Activated CD8-positive, alpha-beta T cell treated with anti-CD3 and anti-CD28 coated beads, Interleukin-2, amount 10 ng/mL, durations not matched to agents 7 days and 5 days (primary cell): ENCODE measurements at regions of chr14 and their contacts with region 1.

Region 1: DNA sequence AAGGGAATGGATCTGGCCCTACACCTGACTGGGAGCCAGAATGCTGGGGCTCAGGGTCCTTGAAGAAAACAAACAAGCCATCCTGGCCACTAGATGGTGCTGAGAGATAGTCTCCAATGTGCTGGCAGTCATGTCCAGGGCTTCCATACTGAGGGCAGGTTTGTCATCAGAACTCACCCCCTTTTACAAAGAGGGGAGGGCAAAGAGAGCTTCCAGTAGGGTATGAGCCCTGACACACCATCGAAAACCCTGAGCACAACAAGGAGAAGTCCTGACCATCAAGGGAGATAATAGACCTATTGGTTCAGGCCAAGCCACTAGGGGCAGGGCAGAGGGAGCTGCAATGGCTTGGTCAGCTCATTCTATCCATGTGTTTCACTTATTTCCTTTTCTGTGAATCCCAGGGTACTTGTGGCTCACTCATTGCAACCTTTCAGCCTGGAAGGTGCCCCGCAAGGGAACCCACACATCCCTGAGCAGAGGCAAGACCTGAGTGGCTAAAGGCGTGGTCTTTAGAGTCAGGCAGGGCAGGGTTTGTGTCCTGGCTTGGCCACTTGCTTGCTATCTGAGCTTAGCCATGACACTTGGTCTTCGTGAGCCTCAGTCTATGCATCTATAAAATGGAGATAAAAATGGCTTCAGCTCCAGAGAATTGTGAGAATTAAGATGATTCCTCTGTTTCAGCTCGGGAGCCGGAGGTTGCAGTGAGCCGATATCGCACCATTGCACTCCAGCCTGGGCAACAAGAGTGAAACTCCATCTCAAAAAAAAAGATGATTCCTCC is 6.2 kb upstream of the PLEKHH1 start:
- DNase-seq: peak; percentile 60
- ATAC-seq: peak; percentile 83
- H3K4me3 Mint-ChIP-seq: no peak overlapping the region
- H3K27ac Mint-ChIP-seq: no peak overlapping the region
- H3K4me1 Mint-ChIP-seq: no peaks in the 10 kb centered on the region
- H3K27me3 Mint-ChIP-seq: peaks cover 56% of the 10 kb centered on the region

Region 2: DNA sequence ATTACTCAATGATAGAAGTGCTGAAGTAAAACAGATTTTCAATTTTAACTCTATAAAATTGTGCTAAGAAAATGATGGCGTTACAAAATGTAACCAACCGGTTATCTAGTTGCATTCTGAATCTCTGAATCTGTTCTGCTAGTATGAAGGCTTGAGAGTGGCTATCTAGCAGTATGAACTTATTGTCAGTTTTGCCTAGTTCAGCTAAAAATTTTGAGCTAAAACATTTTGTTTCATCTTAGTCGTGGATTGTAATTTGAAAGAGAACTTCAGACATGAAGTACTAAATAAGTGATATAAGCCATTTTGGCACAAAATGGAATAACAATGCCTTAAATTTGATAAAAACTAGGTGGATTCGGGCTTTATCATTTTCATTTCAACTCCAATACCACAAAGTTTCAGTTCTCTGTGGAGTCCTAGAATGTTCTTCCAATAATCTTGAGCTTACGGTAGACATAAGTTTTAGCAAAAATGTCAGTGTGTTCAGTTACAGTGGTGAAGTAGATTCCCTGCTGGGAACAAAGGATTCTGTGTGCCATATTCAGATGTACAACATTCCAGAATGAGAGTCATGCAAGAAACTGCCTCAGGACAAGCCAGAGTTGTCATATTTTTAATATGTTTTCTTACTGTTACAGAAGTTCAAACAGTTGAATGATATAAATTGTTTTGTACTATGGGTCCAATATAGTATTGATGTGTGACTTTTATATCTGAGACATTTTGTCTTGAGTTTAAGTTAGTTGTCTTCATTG is 195.3 kb before region 1 on chr14:
- CTCF ChIA-PET with region 1: no interaction called
- POLR2A ChIA-PET with region 1: no interaction called
- DNase-seq: no peak
- ATAC-seq: no peak
- H3K4me3 Mint-ChIP-seq: no peak overlapping the region
- H3K27ac Mint-ChIP-seq: no peak overlapping the region
- H3K4me1 Mint-ChIP-seq: no peaks in the 10 kb centered on the region
- H3K27me3 Mint-ChIP-seq: no peaks in the 10 kb centered on the region

Region 3: GRCh38 chr14:67510121-67510520 is 16.7 kb before region 1 on chr14:
- CTCF ChIA-PET with region 1: interaction called, 26 read pairs
- POLR2A ChIA-PET with region 1: no interaction called
- DNase-seq: no peak
- ATAC-seq: no peak
- H3K4me3 Mint-ChIP-seq: no peak overlapping the region
- H3K27ac Mint-ChIP-seq: no peak overlapping the region
- H3K4me1 Mint-ChIP-seq: peaks cover 10% of the 10 kb centered on the region
- H3K27me3 Mint-ChIP-seq: peaks cover 21% of the 10 kb centered on the region

Region 4: GRCh38 chr14:67515386-67516079 is 11.3 kb before region 1 on chr14:
- CTCF ChIA-PET with region 1: interaction called, 26 read pairs
- POLR2A ChIA-PET with region 1: interaction called, 3 read pairs
- DNase-seq: peak; percentile 43
- ATAC-seq: peak; percentile 71
- H3K4me3 Mint-ChIP-seq: peak overlapping the region; percentile 55
- H3K27ac Mint-ChIP-seq: no peak overlapping the region
- H3K4me1 Mint-ChIP-seq: peaks cover 23% of the 10 kb centered on the region
- H3K27me3 Mint-ChIP-seq: peaks cover 35% of the 10 kb centered on the region

Region 5: GRCh38 chr14:67541448-67542387 is 14.8 kb after region 1 on chr14:
- CTCF ChIA-PET with region 1: interaction called, 36 read pairs
- POLR2A ChIA-PET with region 1: interaction called, 3 read pairs
- DNase-seq: peak; percentile 26
- ATAC-seq: peak; percentile 83
- H3K4me3 Mint-ChIP-seq: peak overlapping the region; percentile 55
- H3K27ac Mint-ChIP-seq: no peak overlapping the region
- H3K4me1 Mint-ChIP-seq: peaks cover 11% of the 10 kb centered on the region
- H3K27me3 Mint-ChIP-seq: peaks cover 50% of the 10 kb centered on the region

Region 6: DNA sequence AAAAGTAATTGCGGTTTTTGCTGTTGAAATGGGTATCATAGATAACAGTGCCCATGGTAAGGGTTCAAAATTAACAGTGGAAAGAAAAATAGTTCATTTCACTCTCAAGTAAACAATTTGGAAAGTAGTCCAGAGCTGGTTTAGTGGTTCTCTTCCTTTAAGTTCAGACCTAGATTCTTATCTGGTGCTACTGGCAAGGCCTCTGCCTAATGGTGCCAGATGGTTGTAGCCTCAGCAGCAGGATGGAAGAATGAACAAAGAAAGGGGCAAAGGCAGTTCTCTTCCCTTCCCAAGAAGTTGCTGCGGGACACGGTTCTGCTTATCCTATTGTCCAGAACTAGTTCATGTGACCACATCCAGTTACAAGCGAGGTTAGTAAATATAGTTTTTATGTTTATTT is 103.3 kb after region 1 on chr14:
- CTCF ChIA-PET with region 1: no interaction called
- POLR2A ChIA-PET with region 1: no interaction called
- DNase-seq: no peak
- ATAC-seq: no peak
- H3K4me3 Mint-ChIP-seq: no peak overlapping the region
- H3K27ac Mint-ChIP-seq: no peak overlapping the region
- H3K4me1 Mint-ChIP-seq: no peaks in the 10 kb centered on the region
- H3K27me3 Mint-ChIP-seq: no peaks in the 10 kb centered on the region

Region 7: DNA sequence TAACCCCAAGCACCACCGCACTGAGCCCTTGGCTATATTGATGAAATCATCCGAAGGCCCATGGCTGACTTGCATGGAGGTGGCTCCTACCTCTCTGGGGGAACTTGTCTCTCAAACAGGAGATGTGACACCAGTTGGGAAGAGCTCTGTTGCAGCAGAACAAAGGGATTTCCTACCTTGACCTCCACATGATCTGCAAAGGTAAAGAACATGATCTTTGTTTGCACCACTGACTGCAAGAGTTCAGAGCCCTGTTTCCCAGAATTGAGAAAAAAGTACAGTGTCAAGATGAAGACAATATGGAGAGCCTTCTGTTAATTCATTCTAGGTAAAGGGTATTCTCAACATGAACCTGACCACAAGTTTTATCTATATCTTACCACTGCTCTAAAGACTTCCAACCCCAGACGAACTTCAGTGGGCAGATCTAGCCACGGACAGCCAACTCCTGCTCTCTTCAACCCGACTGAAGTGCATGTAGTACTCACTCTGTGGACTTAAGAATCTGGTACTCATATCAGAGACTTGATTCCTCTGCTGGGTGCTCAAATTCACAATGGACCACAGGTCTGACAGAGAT is 257.5 kb after region 1 on chr14:
- CTCF ChIA-PET with region 1: no interaction called
- POLR2A ChIA-PET with region 1: no interaction called
- DNase-seq: peak; percentile 34
- ATAC-seq: peak; percentile 60
- H3K4me3 Mint-ChIP-seq: no peak overlapping the region
- H3K27ac Mint-ChIP-seq: no peak overlapping the region
- H3K4me1 Mint-ChIP-seq: peaks cover 12% of the 10 kb centered on the region
- H3K27me3 Mint-ChIP-seq: no peaks in the 10 kb centered on the region